ENCODE measurements at regions of chr16 and their contacts with region 1.

Region 1: GRCh38 chr16:66728117-66728787 is 23.2 kb downstream of the DYNC1LI2 start:
- DNase-seq: peak; percentile 70
- H3K4me3 ChIP-seq: no peak overlapping the region
- H3K27ac ChIP-seq: no peak overlapping the region
- H3K4me1 ChIP-seq: no peaks in the 10 kb centered on the region
- H3K27me3 ChIP-seq: no peaks in the 10 kb centered on the region
- CTCF ChIP-seq: peak; percentile 43 to 48
- POLR2A ChIP-seq: no peak

Region 2: DNA sequence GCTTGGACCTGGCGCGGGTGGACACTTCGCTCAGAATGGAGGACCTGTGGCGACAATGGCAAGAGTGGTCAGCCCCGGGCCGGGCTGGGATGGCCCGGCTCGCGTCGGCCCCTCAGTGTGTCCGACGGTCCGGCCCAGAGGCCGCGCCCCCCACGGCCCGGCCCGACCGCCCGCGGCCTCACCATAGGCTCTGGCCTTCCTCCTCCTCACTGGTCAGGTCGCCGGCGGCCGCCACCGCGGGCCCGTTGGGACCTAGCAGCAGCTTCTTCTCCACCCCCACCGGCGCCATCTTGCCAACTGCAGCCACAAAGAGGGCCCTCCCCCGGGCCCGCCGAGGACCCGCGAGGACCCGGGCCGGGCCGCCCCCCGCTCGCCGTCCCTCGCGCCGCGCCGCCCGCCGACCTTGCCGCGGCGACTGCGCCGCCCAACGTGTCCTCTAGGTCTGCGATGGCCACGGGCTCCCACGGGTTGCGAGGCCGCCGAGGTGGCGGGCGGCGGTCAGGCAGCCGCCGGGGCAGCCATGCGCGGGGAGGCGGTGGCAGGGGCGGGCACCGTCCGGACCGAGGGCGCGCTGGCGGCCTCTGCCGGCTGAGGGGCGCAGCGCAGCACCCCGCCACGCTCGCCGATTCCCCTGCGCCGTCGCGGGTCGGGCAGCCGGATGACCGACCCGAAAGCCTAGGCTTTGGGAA is 23.2 kb after region 1 on chr16 and contains the start of gene DYNC1LI2:
- CTCF ChIA-PET with region 1: interaction called, 14 read pairs
- POLR2A ChIA-PET with region 1: no interaction called
- dilution Hi-C with region 1: no loop called
- intact Hi-C with region 1: loop called (anchors 1 kb)
- DNase-seq: peak; percentile 60
- H3K4me3 ChIP-seq: peak within 1 kb of the TSS; percentile 87 to 95 (median 92)
- H3K27ac ChIP-seq: peak within 1 kb of the TSS; percentile 95
- H3K4me1 ChIP-seq: peaks cover 20% of the 10 kb centered on the region
- H3K27me3 ChIP-seq: peaks cover 3 to 4% of the 10 kb centered on the region in 2 experiments
- CTCF ChIP-seq: peak; percentile 76 to 86
- POLR2A ChIP-seq: peak; percentile 59
- total RNA-seq, gene DYNC1LI2: 156 and 159 TPM in 2 replicates